Activated CD4-positive, alpha-beta memory T cell treated with anti-CD3 and anti-CD28 coated beads for 36 hours (primary cell): ENCODE measurements at regions of chr13 and their contacts with region 1.

Region 1: DNA sequence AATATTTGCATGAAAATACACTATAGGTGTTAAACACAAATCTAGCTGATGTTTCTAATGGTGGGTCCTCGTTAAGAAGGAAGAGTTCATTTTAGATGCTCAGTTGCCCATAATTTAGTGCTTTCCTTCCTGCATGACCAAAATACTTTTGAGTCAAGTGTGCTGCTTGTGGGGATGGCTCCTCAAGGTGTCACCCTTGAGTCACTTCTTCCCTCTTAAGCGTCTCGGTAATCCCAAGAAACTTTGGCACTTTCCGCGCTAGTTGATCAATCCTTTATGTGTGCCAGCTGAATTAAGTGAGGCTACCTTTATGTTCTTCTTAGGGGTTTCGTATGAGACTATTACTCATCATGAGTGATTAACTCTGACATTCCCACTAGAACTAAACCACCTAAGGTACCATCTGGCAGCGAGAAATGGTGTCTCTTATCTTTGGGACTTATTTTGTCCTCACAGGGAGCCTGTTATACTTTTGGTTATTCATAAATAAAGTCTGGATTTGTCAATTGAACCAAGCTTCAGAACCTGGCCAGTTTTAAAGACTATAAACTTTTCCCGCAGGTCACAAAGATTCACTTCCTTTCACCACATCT is 106.8 kb downstream of the NHLRC3 start:
- DNase-seq: peak; percentile 59
- H3K4me3 Mint-ChIP-seq: no peak overlapping the region
- H3K27ac Mint-ChIP-seq: no peak overlapping the region
- H3K4me1 Mint-ChIP-seq: peaks cover 43% of the 10 kb centered on the region
- H3K27me3 Mint-ChIP-seq: peaks cover 19% of the 10 kb centered on the region

Region 2: DNA sequence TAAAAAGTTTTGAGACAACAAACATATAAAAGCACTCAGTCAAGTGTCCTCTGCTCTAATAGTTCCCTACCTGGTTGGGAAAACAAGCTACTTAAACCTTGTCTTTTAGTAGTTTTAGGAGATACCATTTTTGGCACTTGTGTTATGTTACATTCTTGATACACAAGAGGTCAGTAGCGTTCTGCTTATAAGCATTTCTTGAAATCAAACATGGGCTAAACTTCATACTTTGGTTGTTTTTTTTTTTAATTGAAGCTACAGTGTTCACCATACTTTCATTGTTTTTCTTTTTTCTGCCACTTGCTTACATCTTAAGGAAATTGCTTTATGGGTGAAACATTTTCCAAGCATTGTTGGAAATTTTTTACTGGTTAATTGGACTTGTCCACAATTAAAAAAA is 93.9 kb before region 1 on chr13:
- CTCF ChIA-PET with region 1: interaction called, 5 read pairs
- POLR2A ChIA-PET with region 1: no interaction called
- intact Hi-C with region 1: loop called (anchors 5 kb)
- DNase-seq: no peak
- H3K4me3 Mint-ChIP-seq: no peak overlapping the region
- H3K27ac Mint-ChIP-seq: no peak overlapping the region
- H3K4me1 Mint-ChIP-seq: peaks cover 3% of the 10 kb centered on the region
- H3K27me3 Mint-ChIP-seq: no peaks in the 10 kb centered on the region

Region 3: DNA sequence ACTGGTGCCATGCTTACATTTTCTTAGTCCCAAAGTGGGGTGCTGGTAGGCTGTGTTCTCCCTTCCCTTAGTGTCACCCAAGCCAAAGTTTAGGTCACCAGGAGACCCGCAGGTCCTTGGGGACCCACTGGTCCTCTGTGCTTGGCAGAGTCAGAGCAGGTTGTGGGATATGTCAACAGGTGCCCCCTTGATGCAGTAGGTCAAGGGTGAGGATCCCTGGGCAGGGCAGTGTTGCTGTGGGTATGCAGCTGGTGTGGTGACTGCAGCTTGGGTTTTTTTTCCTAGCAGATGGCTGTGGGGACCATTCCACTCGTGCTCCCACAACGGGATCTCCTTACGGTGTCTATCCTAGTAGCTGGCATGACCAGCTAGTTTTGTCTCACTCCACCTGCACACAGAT is 83.0 kb before region 1 on chr13:
- CTCF ChIA-PET with region 1: no interaction called
- POLR2A ChIA-PET with region 1: no interaction called
- intact Hi-C with region 1: no loop called
- DNase-seq: no peak
- H3K4me3 Mint-ChIP-seq: no peak overlapping the region
- H3K27ac Mint-ChIP-seq: no peak overlapping the region
- H3K4me1 Mint-ChIP-seq: peaks cover 8% of the 10 kb centered on the region
- H3K27me3 Mint-ChIP-seq: no peaks in the 10 kb centered on the region

Region 4: DNA sequence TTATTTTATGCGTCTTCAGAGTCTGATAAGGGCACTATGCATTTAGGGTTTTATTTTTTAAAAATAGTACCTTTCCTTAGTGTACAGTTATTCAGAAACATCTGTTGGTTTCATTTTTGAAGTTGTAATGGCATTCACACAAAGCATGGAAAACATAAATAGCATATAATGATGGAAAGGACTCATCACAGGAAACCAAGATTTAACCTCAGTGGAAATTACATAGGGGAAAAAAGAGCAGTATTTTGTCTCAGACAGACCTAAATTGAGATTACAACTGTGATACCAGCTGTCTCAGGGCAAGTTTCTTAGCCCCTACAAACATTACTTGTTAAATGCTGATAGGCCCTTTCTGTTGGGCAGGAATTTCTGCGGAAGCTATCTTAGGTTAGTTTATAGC is 49.5 kb before region 1 on chr13:
- CTCF ChIA-PET with region 1: interaction called, 7 read pairs
- POLR2A ChIA-PET with region 1: interaction called, 4 read pairs
- intact Hi-C with region 1: loop called (anchors 1 kb)
- DNase-seq: no peak
- H3K4me3 Mint-ChIP-seq: peak overlapping the region; percentile 54
- H3K27ac Mint-ChIP-seq: peak overlapping the region; percentile 87
- H3K4me1 Mint-ChIP-seq: peaks cover 35% of the 10 kb centered on the region
- H3K27me3 Mint-ChIP-seq: no peaks in the 10 kb centered on the region

Region 5: GRCh38 chr13:39159393-39159792 is 14.4 kb after region 1 on chr13:
- CTCF ChIA-PET with region 1: interaction called, 3 read pairs
- POLR2A ChIA-PET with region 1: no interaction called
- intact Hi-C with region 1: loop called (anchors 1 kb)
- DNase-seq: peak; percentile 37
- H3K4me3 Mint-ChIP-seq: no peak overlapping the region
- H3K27ac Mint-ChIP-seq: peak overlapping the region; percentile 55
- H3K4me1 Mint-ChIP-seq: peaks cover 22% of the 10 kb centered on the region
- H3K27me3 Mint-ChIP-seq: peaks cover 6% of the 10 kb centered on the region

Region 6: GRCh38 chr13:39263033-39263432 is 118.0 kb after region 1 on chr13:
- CTCF ChIA-PET with region 1: interaction called, 55 read pairs
- POLR2A ChIA-PET with region 1: interaction called, 4 read pairs
- intact Hi-C with region 1: loop called (anchors 1 kb)
- DNase-seq: peak; percentile 63
- H3K4me3 Mint-ChIP-seq: no peak overlapping the region
- H3K27ac Mint-ChIP-seq: no peak overlapping the region
- H3K4me1 Mint-ChIP-seq: peaks cover 19% of the 10 kb centered on the region
- H3K27me3 Mint-ChIP-seq: no peaks in the 10 kb centered on the region

Region 7: GRCh38 chr13:39306639-39307589 is 161.9 kb after region 1 on chr13:
- CTCF ChIA-PET with region 1: no interaction called
- POLR2A ChIA-PET with region 1: no interaction called
- intact Hi-C with region 1: loop called (anchors 2 kb)
- DNase-seq: peak; percentile 72
- H3K4me3 Mint-ChIP-seq: peak overlapping the region; percentile 7
- H3K27ac Mint-ChIP-seq: peak overlapping the region; percentile 28
- H3K4me1 Mint-ChIP-seq: peaks cover 21% of the 10 kb centered on the region
- H3K27me3 Mint-ChIP-seq: peaks cover 8% of the 10 kb centered on the region